ENCODE measurements at regions of chr9 and their contacts with region 1.

Region 1: DNA sequence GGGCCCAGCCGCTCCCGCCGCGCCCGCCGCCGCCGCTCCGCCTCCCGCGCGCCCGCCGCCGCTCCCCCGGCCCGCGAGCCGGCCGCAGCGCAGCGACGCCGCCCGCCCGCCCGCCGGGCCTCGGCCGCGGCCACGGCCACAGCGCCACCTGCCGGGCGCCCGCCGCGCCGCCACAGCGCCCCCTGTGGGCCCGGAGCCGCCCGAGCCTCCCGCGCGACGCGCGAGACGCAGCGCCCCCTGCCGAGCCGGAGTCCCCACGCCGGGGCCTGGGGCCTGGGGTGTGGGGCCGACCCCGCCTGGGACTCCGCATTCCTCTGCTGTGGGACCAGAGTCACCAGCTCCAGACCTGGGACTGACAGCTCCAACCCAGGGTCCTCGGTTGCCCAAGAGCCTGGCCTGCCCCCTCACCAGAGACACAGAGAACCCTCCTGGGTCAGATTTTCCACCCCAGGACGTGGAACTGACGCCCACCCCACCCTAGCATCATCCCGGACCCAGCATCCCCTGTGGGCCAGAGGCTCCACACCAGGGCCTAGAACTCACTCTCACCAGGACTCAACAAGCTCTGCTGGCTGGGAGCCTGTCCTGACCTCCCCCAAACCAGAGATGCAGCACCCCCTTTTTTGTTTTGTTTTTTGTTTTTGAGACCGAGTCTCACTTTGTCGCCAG is at the start of gene RAPGEF1:
- DNase-seq: peak in 1 of 2 experiments; percentile 80
- H3K4me3 ChIP-seq: peak within 1 kb of the TSS; percentile 67
- H3K27ac ChIP-seq: no peak within 1 kb of the TSS
- H3K4me1 ChIP-seq: peaks cover 47% of the 10 kb centered on the region
- H3K27me3 ChIP-seq: no peaks in the 10 kb centered on the region
- CTCF ChIP-seq: peak; percentile 82
- total RNA-seq, gene RAPGEF1: 66.5 and 76.0 TPM in 2 replicates

Region 2: DNA sequence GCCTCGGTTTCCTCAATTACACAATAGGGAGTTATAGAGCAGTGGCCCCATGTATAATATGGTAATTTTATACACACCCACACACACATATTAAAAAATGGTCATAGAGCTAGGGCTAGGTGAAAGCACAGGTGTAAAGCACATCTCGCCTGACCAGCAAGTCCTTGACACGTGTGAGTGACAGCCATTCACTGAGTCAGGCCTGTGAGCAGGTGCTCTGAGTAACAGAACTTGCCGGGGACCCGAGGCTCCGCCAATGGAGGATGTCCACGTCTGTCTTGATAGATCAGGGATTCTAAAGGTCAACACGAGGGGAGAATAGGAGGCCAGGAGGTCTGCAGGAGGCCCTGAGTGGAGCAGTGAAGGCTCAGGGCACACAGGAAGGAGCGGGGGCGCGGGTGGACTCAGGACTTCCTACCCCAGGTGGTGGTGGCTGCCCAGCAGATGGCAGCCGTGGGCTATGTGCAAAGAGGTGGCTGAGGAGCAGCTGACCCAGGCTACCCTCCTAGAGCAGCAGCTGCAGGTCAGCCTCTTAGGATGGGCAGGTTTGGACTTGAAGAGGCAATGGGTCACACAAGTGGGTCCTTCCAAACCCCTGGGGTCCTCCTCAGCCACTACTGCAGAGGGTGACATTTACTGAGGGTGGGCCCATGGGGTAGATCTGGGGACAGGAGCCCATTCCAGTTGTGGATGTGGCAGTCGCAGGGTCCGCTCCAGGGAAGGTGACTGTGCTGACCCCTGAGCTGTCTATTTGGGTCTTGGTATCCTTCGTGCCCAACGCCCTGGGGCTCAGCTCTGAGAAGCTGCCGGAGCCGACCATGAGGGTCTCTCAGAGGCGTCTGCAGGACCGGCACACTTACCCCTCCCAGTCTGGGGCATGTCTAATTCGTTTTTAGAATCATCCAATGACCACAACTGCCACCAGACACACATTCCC is 148.9 kb before region 1 on chr9:
- CTCF ChIA-PET with region 1: interaction called, 4 read pairs
- POLR2A ChIA-PET with region 1: interaction called, 3 read pairs
- intact Hi-C with region 1: loop called (anchors 1 kb)
- DNase-seq: peak; percentile 46 to 83
- H3K4me3 ChIP-seq: no peak overlapping the region
- H3K27ac ChIP-seq: no peak overlapping the region
- H3K4me1 ChIP-seq: peaks cover 10% of the 10 kb centered on the region
- H3K27me3 ChIP-seq: no peaks in the 10 kb centered on the region
- CTCF ChIP-seq: peak; percentile 91

Region 3: GRCh38 chr9:131707733-131708157 is 32.4 kb before region 1 on chr9:
- CTCF ChIA-PET with region 1: no interaction called
- POLR2A ChIA-PET with region 1: no interaction called
- intact Hi-C with region 1: no loop called
- DNase-seq: no peak
- H3K4me3 ChIP-seq: no peak overlapping the region
- H3K27ac ChIP-seq: 0 out of 2 replicates have a peak overlapping the region, but pooled peaks have one; percentile 11
- H3K4me1 ChIP-seq: peaks cover 13% of the 10 kb centered on the region
- H3K27me3 ChIP-seq: no peaks in the 10 kb centered on the region
- CTCF ChIP-seq: no peak